Activated T-helper 2 cell treated with anti-CD3 and anti-CD28 coated beads, Interferon-gamma antibody, Interleukin-2, Interleukin-4, amounts not matched to agents 10 μg/mL and 5 μg/mL and 100 μg/mL, durations not matched to agents 14 hours and 24 hours and 36 hours (primary cell): ENCODE measurements at regions of chr12 and their contacts with region 1.

Region 1: DNA sequence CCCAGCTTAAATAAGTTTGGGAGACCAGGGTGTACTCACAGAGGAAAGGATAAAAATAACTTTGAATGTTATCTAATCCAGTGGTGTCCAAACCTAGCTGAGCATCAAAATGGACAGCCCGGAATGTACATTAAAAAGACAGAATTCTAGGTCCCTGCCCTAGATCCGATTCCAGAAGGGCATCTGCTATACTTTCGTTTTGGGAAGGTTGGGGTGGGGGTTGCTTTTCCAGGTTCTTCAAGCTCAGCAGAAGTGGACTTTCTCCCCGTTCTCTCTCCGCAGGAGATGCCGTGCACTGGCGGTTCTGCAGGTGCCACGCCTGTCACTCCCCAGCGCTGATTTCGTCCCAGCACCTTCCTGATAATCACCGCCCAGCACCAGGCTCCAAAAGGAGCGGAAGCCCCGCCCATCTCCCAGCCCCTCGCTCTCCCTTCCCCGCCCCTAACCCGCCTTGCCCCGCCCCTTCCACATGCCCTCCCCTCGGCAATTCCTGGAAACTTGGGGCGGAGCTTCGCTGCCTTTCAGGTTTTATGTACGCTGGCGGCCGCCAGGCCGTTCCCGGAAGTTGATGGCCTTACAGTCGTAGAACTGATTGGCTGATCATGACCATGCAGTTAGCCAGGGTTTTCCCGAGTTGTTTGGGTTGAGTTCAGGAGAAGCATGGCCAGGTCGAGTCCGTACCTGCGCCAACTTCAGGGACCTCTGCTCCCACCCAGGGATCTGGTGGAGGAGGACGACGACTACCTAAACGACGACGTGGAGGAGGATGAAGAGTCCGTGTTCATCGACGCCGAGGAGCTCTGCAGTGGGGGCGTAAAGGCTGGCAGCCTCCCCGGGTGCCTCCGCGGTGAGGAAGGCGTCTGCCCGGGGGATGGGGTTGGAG is at the start of gene HELB:
- DNase-seq: peak; percentile 91
- H3K4me3 Mint-ChIP-seq: peak within 1 kb of the TSS; percentile 98
- H3K27ac Mint-ChIP-seq: peak within 1 kb of the TSS; percentile 99
- H3K4me1 Mint-ChIP-seq: peaks cover 48% of the 10 kb centered on the region
- H3K27me3 Mint-ChIP-seq: peaks cover 2% of the 10 kb centered on the region
- total RNA-seq, gene HELB: 17.1 and 18.2 TPM in 2 replicates

Region 2: DNA sequence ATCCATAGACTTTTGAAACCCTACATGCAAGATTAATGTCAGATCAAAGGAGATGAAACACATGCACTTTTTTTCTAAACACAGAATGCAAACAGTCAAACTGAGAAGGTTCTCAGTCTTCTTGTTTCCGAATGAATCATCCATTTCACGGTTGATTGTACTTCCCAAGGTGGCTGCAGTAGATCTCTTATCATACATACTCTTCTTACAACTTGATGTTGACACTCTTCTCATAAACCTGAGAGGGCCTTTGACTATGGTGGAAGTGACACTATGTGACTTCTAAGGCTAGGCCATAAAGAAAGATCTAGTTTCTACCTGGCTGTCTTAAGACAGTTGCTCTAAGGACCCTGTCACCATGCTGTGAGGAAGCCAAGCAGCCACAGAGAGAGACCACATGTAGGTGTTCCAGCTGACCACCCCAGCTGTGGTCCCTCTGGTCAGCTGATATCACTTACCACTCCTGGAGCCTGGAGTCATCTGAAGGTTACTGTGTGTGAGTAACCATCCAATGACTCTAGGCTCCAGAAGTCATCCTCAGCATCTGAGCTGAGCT is 545.2 kb before region 1 on chr12:
- intact Hi-C with region 1: loop called (anchors 10 kb)
- DNase-seq: no peak
- H3K4me3 Mint-ChIP-seq: no peak overlapping the region
- H3K27ac Mint-ChIP-seq: peak overlapping the region; percentile 73
- H3K4me1 Mint-ChIP-seq: peaks cover 22% of the 10 kb centered on the region
- H3K27me3 Mint-ChIP-seq: peaks cover 49% of the 10 kb centered on the region

Region 3: DNA sequence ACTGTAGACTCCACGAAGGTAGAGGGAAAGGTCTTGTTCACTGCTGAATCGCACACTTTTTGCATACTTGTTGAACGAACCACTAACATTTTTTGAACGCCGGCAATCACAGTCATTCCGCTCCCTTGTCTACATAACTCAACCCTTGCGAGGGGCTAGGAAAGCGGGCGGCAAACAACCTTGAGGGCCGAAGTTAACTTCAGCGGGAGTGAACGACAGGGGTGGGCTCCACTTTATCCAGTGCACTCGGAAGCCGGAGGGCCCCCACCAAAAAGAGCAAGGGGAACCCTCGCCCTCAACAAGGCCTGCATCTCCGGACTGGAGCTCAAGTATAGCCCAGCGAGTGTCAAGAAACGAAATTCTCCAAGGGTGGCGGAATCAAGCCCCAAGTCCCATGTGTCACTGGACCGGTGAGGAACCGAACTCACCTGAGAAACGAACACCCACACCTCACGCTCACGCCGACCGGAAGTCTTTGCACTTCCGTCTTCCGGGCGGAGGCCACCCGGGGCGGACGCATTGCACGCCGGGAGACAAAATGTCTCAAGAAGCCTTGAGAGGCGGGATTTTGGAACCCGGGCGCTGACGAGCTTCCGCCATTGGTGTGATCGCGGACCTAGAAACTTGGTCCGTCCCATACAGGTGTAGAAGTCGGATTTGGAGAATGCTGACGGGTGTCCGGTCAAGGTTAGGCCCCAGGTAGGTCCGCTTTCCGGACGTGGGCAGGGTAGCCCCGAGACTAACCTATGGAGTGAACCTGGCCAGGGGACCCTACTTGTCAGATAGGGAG is 171.7 kb before region 1 on chr12 and contains the start of gene LLPH:
- intact Hi-C with region 1: loop called (anchors 1 kb)
- DNase-seq: peak; percentile 85
- H3K4me3 Mint-ChIP-seq: peak within 1 kb of the TSS; percentile 99
- H3K27ac Mint-ChIP-seq: peak within 1 kb of the TSS; percentile 95
- H3K4me1 Mint-ChIP-seq: peaks cover 35% of the 10 kb centered on the region
- H3K27me3 Mint-ChIP-seq: no peaks in the 10 kb centered on the region
- total RNA-seq, gene LLPH: 31.0 and 33.7 TPM in 2 replicates

Region 4: DNA sequence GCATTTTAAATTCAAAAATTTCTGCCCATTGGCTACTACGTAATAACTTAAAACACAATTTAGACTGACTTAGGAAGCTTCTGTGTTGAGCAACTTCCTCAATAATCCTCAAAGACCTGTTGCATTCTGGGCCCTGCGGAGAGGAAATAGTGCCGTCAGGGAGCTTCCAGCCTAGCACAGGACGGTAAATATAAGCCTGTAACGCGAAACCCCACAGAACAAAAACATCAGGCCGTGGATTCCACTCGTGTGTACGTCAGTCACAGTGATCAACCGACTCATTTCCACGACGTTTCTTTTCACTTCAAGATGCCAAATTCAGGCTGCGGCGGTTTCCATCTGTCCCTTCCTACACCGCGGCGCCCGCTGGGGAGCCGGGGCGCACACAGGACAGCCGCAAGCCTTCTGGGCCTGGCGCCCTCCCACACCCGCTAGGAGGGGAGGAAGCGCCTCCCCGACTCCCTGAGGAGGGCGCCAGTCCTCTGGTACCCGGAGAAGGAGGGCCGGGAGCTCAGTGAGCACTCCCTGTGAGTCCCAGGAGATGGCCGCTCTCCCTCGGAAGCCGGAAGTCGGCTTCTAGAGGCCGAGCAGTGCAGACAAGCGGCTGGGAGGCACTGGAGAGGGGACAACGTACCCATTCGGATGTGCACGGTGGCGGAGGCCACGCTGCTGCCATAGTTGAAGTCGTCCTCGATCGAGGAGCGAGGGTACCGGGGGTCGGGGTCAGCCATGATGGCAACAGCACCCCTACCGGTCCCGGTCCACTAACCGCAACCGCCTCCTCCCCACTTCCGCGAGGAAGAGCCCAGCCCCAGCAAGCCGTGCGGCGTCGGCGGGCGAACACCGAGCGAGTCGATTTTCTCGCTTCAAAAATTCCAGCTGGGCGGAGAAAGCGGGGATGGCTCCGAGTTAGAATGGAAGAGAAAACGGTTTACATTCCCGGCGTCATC is 132.7 kb before region 1 on chr12 and contains the start of gene TMBIM4:
- intact Hi-C with region 1: loop called (anchors 1 kb)
- DNase-seq: peak; percentile 81
- H3K4me3 Mint-ChIP-seq: peak within 1 kb of the TSS; percentile 91
- H3K27ac Mint-ChIP-seq: peak within 1 kb of the TSS; percentile 99
- H3K4me1 Mint-ChIP-seq: peaks cover 24% of the 10 kb centered on the region
- H3K27me3 Mint-ChIP-seq: no peaks in the 10 kb centered on the region
- total RNA-seq, gene TMBIM4: 62.4 and 75.0 TPM in 2 replicates

Region 5: GRCh38 chr12:66269757-66270383 is 32.3 kb before region 1 on chr12:
- intact Hi-C with region 1: loop called (anchors 5 kb)
- DNase-seq: no peak
- H3K4me3 Mint-ChIP-seq: no peak overlapping the region
- H3K27ac Mint-ChIP-seq: no peak overlapping the region
- H3K4me1 Mint-ChIP-seq: peaks cover 6% of the 10 kb centered on the region
- H3K27me3 Mint-ChIP-seq: peaks cover 2% of the 10 kb centered on the region

Region 6: GRCh38 chr12:66288121-66288520 is 14.1 kb before region 1 on chr12:
- intact Hi-C with region 1: loop called (anchors 1 kb)
- DNase-seq: peak; percentile 67
- H3K4me3 Mint-ChIP-seq: no peak overlapping the region
- H3K27ac Mint-ChIP-seq: peak overlapping the region; percentile 48
- H3K4me1 Mint-ChIP-seq: peaks cover 61% of the 10 kb centered on the region
- H3K27me3 Mint-ChIP-seq: no peaks in the 10 kb centered on the region

Region 7: DNA sequence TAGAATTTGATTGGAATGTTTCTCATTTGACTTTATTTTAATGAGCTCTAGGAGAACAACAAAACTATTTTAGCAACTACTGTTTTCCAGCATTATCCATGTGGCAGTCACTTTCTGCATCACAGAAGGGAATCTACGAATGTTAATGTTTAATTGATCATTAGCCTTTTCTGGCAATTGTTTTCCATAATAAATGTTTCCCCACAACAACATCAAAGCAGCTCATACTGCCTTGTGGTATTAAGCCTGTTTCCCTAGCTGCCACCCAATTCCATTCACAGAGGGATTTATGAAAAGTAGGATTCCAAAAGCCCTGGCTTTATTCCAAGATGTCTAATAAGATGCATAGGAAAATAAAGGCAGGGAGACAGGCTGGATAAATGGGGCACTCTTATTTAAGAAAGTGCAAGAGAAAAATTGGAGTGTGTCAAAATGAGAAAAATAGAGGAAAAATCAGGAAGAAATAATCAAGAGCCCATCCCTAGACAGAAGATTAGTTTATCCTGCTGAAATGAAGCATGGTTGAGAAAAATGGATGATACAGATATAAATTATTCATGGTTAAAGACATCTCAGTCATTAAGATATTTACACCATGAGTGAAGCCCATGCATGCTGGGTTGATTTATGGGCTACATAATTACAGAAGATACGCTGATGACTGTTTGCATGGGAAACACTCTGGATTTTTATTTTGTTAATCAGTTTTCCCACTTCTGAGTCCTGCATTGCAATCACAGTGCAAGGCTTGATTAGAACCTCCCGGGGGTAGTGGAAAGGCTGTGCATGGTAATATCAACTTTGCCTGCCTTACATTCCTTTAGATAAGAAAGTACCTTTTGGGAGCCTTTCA is 180.4 kb after region 1 on chr12:
- intact Hi-C with region 1: no loop called
- DNase-seq: no peak
- H3K4me3 Mint-ChIP-seq: no peak overlapping the region
- H3K27ac Mint-ChIP-seq: no peak overlapping the region
- H3K4me1 Mint-ChIP-seq: no peaks in the 10 kb centered on the region
- H3K27me3 Mint-ChIP-seq: peaks cover under 1% of the 10 kb centered on the region

Region 8: GRCh38 chr12:66786531-66787308 is 484.5 kb after region 1 on chr12:
- intact Hi-C with region 1: no loop called
- DNase-seq: no peak
- H3K4me3 Mint-ChIP-seq: no peak overlapping the region
- H3K27ac Mint-ChIP-seq: no peak overlapping the region
- H3K4me1 Mint-ChIP-seq: no peaks in the 10 kb centered on the region
- H3K27me3 Mint-ChIP-seq: peaks cover 31% of the 10 kb centered on the region

Region 9: DNA sequence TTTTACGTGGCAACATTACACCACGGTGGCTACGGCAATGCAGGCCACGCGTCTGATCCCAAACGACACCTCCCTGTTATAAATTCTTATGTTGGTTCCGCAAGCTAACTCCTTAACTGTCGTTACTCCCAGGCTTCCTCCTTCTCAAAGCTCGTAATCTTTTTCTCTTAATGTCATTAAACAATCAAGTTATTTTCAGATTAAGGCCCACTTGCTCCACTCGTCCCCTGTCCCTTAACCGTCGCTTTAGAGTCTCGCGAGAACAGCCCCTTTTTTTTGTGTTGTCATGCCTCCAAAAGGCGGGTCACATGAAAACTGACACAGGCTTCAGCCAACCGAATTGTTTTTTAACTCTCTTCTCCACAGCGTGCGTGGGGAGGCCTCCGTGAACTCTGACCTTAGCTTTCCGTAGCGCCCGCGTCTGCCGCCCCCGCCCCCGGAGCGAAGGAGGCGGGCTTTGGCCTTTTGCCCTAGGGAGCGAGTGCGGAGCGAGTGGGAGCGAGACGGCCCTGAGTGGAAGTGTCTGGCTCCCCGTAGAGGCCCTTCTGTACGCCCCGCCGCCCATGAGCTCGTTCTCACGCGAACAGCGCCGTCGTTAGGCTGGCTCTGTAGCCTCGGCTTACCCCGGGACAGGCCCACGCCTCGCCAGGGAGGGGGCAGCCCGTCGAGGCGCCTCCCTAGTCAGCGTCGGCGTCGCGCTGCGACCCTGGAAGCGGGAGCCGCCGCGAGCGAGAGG is 966.9 kb after region 1 on chr12 and contains the start of gene CAND1:
- intact Hi-C with region 1: loop called (anchors 2 kb)
- DNase-seq: peak; percentile 94
- H3K4me3 Mint-ChIP-seq: peak within 1 kb of the TSS; percentile 89
- H3K27ac Mint-ChIP-seq: peak within 1 kb of the TSS; percentile 99
- H3K4me1 Mint-ChIP-seq: peaks cover 31% of the 10 kb centered on the region
- H3K27me3 Mint-ChIP-seq: no peaks in the 10 kb centered on the region
- total RNA-seq, gene CAND1: 197 and 198 TPM in 2 replicates